Thyroid gland (tissue), 4 donors: ENCODE measurements at regions of chr13 and their contacts with region 1.

Region 1: GRCh38 chr13:44422755-44423532 is 49.3 kb downstream of the SERP2 start:
- DNase-seq: no peak
- H3K4me3 ChIP-seq: no peak overlapping the region
- H3K27ac ChIP-seq: no peak overlapping the region
- H3K4me1 ChIP-seq: peaks cover 0 to 12% of the 10 kb centered on the region in 2 donors
- H3K27me3 ChIP-seq: no peaks in the 10 kb centered on the region
- CTCF ChIP-seq: no peak
- POLR2A ChIP-seq: no peak

Region 2: DNA sequence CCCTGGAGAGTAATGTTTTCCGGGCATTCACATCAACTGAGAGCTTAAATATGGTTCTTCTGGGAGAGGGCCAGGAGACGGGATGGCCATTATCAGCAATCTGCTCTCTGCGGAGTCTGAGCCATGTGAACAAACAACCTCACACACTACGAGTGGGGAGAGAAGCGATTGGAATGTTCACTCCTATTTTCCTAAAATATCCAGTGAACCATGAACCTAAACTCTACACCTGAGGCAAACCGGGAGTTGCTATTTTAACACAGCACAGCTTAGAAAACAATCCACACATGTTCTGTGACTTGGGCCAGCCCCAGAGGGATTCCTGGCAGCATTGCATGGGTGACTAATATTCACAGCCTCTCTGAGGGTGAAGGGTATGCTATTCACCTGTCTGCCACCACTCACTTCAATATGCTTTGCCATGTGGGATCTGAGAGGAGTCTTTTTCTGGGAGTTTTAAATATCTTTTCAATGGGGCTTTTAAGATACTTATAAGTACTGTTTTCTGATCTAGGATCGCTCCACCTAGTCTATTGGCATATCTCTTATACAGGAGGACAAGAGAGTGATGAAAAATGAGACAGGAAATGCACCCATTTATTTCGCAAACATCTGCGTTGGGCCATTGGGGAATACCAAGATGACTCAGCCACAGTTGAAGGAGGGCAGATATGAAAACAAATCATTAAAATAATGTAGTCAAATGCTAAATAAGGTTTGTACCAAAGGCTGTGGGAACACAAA is 121.9 kb before region 1 on chr13:
- intact Hi-C with region 1: loop called (anchors 10 kb)
- DNase-seq: peak; percentile 87 to 91
- H3K4me3 ChIP-seq: no peak overlapping the region
- H3K27ac ChIP-seq: peak overlapping the region; percentile 54 to 71 (median 58)
- H3K4me1 ChIP-seq: peaks cover 19 to 47% of the 10 kb centered on the region in 2 donors
- H3K27me3 ChIP-seq: no peaks in the 10 kb centered on the region
- CTCF ChIP-seq: peak in 3 of 6 experiments; percentile 15 to 51 (median 27)
- POLR2A ChIP-seq: no peak

Region 3: DNA sequence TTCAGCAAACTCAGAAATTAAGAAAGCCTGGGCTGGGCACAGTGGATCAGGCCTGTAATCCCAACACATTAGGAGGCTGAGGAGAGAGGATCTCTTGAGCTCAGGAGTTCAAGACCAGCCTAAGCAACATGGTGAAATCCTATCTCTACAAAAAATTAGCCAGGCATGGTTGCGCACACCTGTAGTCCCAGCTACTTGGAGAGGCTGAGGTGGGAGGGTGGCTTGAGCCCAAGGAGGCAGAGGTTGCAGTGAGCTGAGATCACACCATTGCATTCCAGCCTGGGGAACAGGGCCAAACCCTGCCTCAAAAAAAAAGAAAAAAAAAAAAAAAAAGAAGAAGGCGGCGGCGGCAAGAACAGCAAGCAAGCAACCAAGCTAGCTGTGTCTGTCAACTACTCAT is 126.5 kb after region 1 on chr13:
- intact Hi-C with region 1: no loop called
- DNase-seq: no peak
- H3K4me3 ChIP-seq: no peak overlapping the region
- H3K27ac ChIP-seq: no peak overlapping the region
- H3K4me1 ChIP-seq: no peaks in the 10 kb centered on the region
- H3K27me3 ChIP-seq: no peaks in the 10 kb centered on the region
- CTCF ChIP-seq: no peak
- POLR2A ChIP-seq: no peak